ENCODE measurements at regions of chr11 and their contacts with region 1.

Region 1: DNA sequence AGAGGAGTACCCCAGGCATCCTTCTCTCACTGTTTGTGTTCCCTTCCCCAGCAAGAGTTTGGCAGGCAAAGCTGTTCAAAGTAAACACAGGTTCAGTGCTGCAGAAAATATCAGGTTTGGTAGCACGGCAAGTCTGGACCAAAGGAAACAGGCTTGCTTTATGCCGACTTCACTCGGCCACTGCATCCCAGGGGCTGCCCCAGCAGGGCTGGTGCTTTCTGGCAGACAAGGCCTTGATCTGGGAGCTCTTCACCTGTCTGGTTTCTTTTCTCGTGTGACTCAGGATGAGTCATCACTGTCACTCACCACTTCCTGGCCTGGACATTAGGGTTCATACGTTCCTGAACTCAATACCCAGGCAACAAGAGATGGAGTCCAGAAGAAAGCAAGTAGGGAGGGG is 52.6 kb upstream of the NAV2 start:
- DNase-seq: peak; percentile 97
- ATAC-seq: peak; percentile 97
- H3K4me3 ChIP-seq: no peak overlapping the region
- H3K27ac ChIP-seq: peak overlapping the region; percentile 51
- H3K4me1 ChIP-seq: peaks cover 25% of the 10 kb centered on the region
- H3K27me3 ChIP-seq: no peaks in the 10 kb centered on the region
- CTCF ChIP-seq: no peak

Region 2: DNA sequence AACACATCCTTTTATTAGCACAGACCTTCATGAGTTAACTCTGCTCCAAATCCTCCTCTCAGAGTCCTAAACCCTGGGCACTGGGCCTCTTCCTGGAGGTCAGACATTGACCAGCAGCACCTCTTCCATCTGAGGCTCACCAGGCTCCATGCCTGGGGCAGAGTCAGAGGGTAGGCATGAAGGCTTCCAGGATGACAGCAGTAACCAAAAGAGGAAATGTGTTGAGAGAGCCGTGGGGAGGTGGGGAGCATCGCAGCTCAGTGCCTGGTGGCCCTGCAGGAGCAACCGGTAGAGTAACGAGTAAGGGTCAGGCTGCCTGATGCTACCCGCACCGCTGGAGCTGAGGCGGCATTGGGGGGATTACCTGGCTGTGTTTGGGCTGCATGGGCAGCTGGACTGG is 43.1 kb after region 1 on chr11:
- CTCF ChIA-PET with region 1: no interaction called
- POLR2A ChIA-PET with region 1: no interaction called
- intact Hi-C with region 1: no loop called
- DNase-seq: no peak
- ATAC-seq: no peak
- H3K4me3 ChIP-seq: no peak overlapping the region
- H3K27ac ChIP-seq: no peak overlapping the region
- H3K4me1 ChIP-seq: no peaks in the 10 kb centered on the region
- H3K27me3 ChIP-seq: no peaks in the 10 kb centered on the region
- CTCF ChIP-seq: no peak

Region 3: GRCh38 chr11:19723572-19724342 is 63.7 kb after region 1 on chr11:
- CTCF ChIA-PET with region 1: no interaction called
- POLR2A ChIA-PET with region 1: no interaction called
- intact Hi-C with region 1: loop called (anchors 5 kb)
- DNase-seq: peak; percentile 84
- ATAC-seq: peak; percentile 68
- H3K4me3 ChIP-seq: 0 out of 2 replicates have a peak overlapping the region, but pooled peaks have one; percentile 12
- H3K27ac ChIP-seq: peak overlapping the region; percentile 68
- H3K4me1 ChIP-seq: peaks cover 70% of the 10 kb centered on the region
- H3K27me3 ChIP-seq: no peaks in the 10 kb centered on the region
- CTCF ChIP-seq: no peak

Measured in PC-3 (cell line).